ENCODE measurements at regions of chr4 and their contacts with region 1.

Region 1: GRCh38 chr4:85370430-85371032 is 104.4 kb upstream of the ARHGAP24 start:
- DNase-seq: peak; percentile 21
- ATAC-seq: peak; percentile 97
- H3K4me3 ChIP-seq: no peak overlapping the region
- H3K27ac ChIP-seq: no peak overlapping the region
- H3K4me1 ChIP-seq: no peaks in the 10 kb centered on the region
- H3K27me3 ChIP-seq: no peaks in the 10 kb centered on the region
- CTCF ChIP-seq: peak; percentile 62 to 89 (median 85)
- POLR2A ChIP-seq: no peak
- RAD21 ChIP-seq: peak; percentile 73

Region 2: DNA sequence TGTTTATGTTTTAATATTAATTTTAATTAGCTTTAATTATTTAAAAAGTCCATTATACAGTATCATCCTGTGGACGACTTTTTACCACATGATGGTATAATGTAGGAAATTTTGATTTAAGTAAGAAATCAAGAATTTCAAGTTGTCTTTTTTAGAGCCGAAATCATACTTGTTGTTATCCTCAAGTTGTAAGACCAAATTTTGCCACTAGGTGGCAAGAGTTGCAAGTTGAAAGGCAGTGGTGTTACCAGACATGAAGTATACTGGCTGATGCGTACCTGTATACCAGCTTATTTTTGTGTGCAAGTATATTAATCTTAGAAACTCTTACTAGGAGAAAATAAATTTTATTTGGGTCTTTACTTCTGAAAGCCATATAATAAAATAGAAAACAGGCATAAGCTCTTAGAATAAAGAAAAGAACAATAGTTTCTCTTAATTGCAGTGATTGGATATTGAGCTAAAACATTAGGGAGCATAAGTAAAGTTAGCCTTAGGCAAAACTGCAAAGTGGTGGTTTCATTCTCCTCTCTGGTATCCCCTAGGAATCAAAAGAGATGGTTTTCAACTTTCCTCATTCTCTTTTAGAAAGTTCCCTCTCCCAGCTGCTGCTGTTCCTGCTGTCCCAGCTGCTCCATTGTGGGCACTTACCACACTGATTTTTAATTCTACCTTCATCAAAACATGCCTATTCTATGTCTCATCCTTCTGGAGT is 286.0 kb before region 1 on chr4:
- CTCF ChIA-PET with region 1: interaction called, 5 read pairs
- POLR2A ChIA-PET with region 1: no interaction called
- RAD21 ChIA-PET with region 1: interaction called in 1 of 2 experiments, 6 read pairs
- intact Hi-C with region 1: loop called (anchors 1 kb)
- DNase-seq: peak; percentile 75
- ATAC-seq: peak; percentile 79
- H3K4me3 ChIP-seq: no peak overlapping the region
- H3K27ac ChIP-seq: no peak overlapping the region
- H3K4me1 ChIP-seq: no peaks in the 10 kb centered on the region
- H3K27me3 ChIP-seq: no peaks in the 10 kb centered on the region
- CTCF ChIP-seq: peak; percentile 49 to 71 (median 70); a peak in 5 of 6 replicates
- POLR2A ChIP-seq: no peak
- RAD21 ChIP-seq: peak; percentile 75

Region 3: GRCh38 chr4:85147439-85148076 is 223.0 kb before region 1 on chr4:
- CTCF ChIA-PET with region 1: interaction called, 4 read pairs
- POLR2A ChIA-PET with region 1: no interaction called
- RAD21 ChIA-PET with region 1: no interaction called
- intact Hi-C with region 1: loop called (anchors 1 kb)
- DNase-seq: peak; percentile 69
- ATAC-seq: peak; percentile 93
- H3K4me3 ChIP-seq: no peak overlapping the region; a peak in 1 of 4 replicates
- H3K27ac ChIP-seq: no peak overlapping the region
- H3K4me1 ChIP-seq: no peaks in the 10 kb centered on the region; a peak in 1 of 4 replicates
- H3K27me3 ChIP-seq: no peaks in the 10 kb centered on the region
- CTCF ChIP-seq: peak; percentile 43 to 68 (median 67); a peak in 4 of 6 replicates
- POLR2A ChIP-seq: no peak
- RAD21 ChIP-seq: peak; percentile 83

Measured in HCT116 (cell line).